Tibial artery (tissue), 4 donors: ENCODE measurements at regions of chr15 and their contacts with region 1.

Region 1: GRCh38 chr15:75831571-75831979 is 11.7 kb upstream of the UBE2Q2 start:
- DNase-seq: no peak
- H3K4me3 ChIP-seq: no peak overlapping the region
- H3K27ac ChIP-seq: no peak overlapping the region
- H3K4me1 ChIP-seq: no peaks in the 10 kb centered on the region
- H3K27me3 ChIP-seq: peaks cover 0 to 12% of the 10 kb centered on the region in 2 donors
- CTCF ChIP-seq: no peak

Region 2: GRCh38 chr15:75229191-75230015 is 602.2 kb before region 1 on chr15:
- intact Hi-C with region 1: loop called (anchors 5 kb)
- DNase-seq: peak in 1 of 2 donors; percentile 48
- H3K4me3 ChIP-seq: no peak overlapping the region
- H3K27ac ChIP-seq: no peak overlapping the region
- H3K4me1 ChIP-seq: no peaks in the 10 kb centered on the region
- H3K27me3 ChIP-seq: peaks cover 0 to 54% of the 10 kb centered on the region in 2 donors
- CTCF ChIP-seq: no peak

Region 3: GRCh38 chr15:75884041-75884440 is 52.5 kb after region 1 on chr15:
- intact Hi-C with region 1: no loop called
- DNase-seq: no peak
- H3K4me3 ChIP-seq: no peak overlapping the region
- H3K27ac ChIP-seq: no peak overlapping the region
- H3K4me1 ChIP-seq: no peaks in the 10 kb centered on the region
- H3K27me3 ChIP-seq: no peaks in the 10 kb centered on the region
- CTCF ChIP-seq: no peak

Region 4: GRCh38 chr15:75903331-75904239 is 72.0 kb after region 1 on chr15 and contains the start of gene FBXO22:
- intact Hi-C with region 1: no loop called
- DNase-seq: peak; percentile 90 to 93
- H3K4me3 ChIP-seq: peak within 1 kb of the TSS; percentile 76 to 81
- H3K27ac ChIP-seq: peak within 1 kb of the TSS; percentile 77 to 83
- H3K4me1 ChIP-seq: peaks cover 0 to 26% (median 12%) of the 10 kb centered on the region in 4 donors
- H3K27me3 ChIP-seq: no peaks in the 10 kb centered on the region
- CTCF ChIP-seq: no peak